Activated CD4-positive, alpha-beta memory T cell treated with anti-CD3 and anti-CD28 coated beads for 36 hours (primary cell): ENCODE measurements at regions of chr16 and their contacts with region 1.

Region 1: GRCh38 chr16:67816240-67817031 is 9.7 kb downstream of the TSNAXIP1 start:
- DNase-seq: peak; percentile 94
- H3K4me3 Mint-ChIP-seq: peak overlapping the region; percentile 35
- H3K27ac Mint-ChIP-seq: peak overlapping the region; percentile 28
- H3K4me1 Mint-ChIP-seq: peaks cover 2% of the 10 kb centered on the region
- H3K27me3 Mint-ChIP-seq: no peaks in the 10 kb centered on the region

Region 2: DNA sequence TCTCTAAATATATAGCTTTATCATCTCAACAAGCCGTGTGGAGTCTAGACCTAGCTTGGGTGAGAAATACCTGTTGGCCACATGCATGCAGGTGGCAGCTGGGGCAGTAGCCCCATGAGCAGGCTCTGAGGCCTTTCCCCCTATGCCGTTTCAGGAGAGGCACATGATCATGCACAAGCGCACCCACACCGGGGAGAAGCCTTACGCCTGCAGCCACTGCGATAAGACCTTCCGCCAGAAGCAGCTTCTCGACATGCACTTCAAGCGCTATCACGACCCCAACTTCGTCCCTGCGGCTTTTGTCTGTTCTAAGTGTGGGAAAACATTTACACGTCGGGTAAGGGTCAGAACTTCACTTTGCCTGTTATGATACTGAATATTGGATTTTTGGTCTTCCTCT is 188.2 kb before region 1 on chr16:
- CTCF ChIA-PET with region 1: no interaction called
- POLR2A ChIA-PET with region 1: no interaction called
- intact Hi-C with region 1: no loop called
- DNase-seq: no peak
- H3K4me3 Mint-ChIP-seq: no peak overlapping the region
- H3K27ac Mint-ChIP-seq: no peak overlapping the region
- H3K4me1 Mint-ChIP-seq: no peaks in the 10 kb centered on the region
- H3K27me3 Mint-ChIP-seq: no peaks in the 10 kb centered on the region

Region 3: DNA sequence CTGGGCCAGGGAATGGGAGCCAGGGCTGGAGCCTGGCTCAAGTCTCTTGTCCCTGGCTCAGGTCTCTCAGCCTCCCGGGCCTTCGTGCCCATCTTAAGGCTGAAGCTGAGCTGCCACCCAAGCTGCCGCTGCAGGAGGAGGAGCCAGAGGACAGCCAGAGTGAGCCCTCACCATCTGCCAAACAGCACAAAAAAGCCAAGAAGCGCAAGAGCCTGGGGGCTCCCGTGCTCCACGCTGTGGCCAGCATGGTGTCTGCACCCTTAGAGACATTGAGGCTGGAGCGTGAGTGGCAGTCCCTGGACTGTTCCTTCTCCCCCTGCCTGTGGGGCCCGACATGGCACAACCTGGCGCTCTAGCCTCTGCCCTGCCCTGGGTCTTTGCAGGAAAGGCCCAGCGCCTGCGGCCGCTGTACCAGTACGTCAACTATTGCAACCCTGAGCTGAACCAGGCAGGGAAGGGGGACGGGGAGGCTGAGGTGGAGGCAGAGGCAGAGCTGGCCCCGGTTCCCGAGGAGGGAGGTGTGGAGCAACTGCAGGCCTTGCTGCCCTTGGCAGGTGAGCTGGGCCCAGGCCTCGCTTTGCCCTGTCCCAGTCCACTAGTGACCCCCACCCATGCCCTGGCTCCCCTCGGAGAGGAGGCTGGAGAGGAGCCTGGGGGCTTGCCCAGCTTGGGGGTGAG is 148.5 kb before region 1 on chr16:
- CTCF ChIA-PET with region 1: interaction called, 14 read pairs
- POLR2A ChIA-PET with region 1: no interaction called
- intact Hi-C with region 1: no loop called
- DNase-seq: peak; percentile 90
- H3K4me3 Mint-ChIP-seq: peak overlapping the region; percentile 82
- H3K27ac Mint-ChIP-seq: no peak overlapping the region
- H3K4me1 Mint-ChIP-seq: peaks cover 15% of the 10 kb centered on the region
- H3K27me3 Mint-ChIP-seq: no peaks in the 10 kb centered on the region

Region 4: GRCh38 chr16:67760206-67760955 is 56.1 kb before region 1 on chr16:
- CTCF ChIA-PET with region 1: no interaction called
- POLR2A ChIA-PET with region 1: no interaction called
- intact Hi-C with region 1: no loop called
- DNase-seq: no peak
- H3K4me3 Mint-ChIP-seq: no peak overlapping the region
- H3K27ac Mint-ChIP-seq: no peak overlapping the region
- H3K4me1 Mint-ChIP-seq: peaks cover 18% of the 10 kb centered on the region
- H3K27me3 Mint-ChIP-seq: no peaks in the 10 kb centered on the region

Region 5: GRCh38 chr16:67800338-67800926 is 16.0 kb before region 1 on chr16:
- CTCF ChIA-PET with region 1: interaction called, 51 read pairs
- POLR2A ChIA-PET with region 1: no interaction called
- intact Hi-C with region 1: no loop called
- DNase-seq: no peak
- H3K4me3 Mint-ChIP-seq: no peak overlapping the region
- H3K27ac Mint-ChIP-seq: peak overlapping the region; percentile 38
- H3K4me1 Mint-ChIP-seq: peaks cover 62% of the 10 kb centered on the region
- H3K27me3 Mint-ChIP-seq: no peaks in the 10 kb centered on the region

Region 6: DNA sequence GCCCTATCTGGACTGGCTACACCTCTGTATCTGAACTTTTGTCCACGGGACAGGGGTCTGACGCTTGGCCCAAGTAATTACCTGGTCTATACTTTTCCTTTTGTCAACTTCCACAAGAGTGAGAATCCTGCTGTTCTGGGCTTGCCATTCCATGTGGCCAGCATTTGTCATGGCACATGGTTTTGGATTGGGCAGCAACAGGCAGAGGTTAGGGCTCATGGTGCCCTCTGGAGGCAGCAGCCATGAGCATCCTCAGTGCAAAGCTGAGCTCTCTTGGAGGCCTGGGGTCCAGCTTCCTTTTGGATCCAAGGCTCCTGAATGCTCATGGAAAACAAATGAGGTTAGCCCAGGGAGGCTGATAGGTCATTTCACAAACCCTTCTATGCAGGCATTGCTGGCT is 48.9 kb after region 1 on chr16:
- CTCF ChIA-PET with region 1: interaction called, 22 read pairs
- POLR2A ChIA-PET with region 1: no interaction called
- intact Hi-C with region 1: loop called (anchors 5 kb)
- DNase-seq: peak; percentile 32
- H3K4me3 Mint-ChIP-seq: no peak overlapping the region
- H3K27ac Mint-ChIP-seq: no peak overlapping the region
- H3K4me1 Mint-ChIP-seq: peaks cover 10% of the 10 kb centered on the region
- H3K27me3 Mint-ChIP-seq: no peaks in the 10 kb centered on the region

Region 7: GRCh38 chr16:67917852-67918236 is 101.4 kb after region 1 on chr16:
- CTCF ChIA-PET with region 1: interaction called, 25 read pairs
- POLR2A ChIA-PET with region 1: no interaction called
- intact Hi-C with region 1: no loop called
- DNase-seq: peak; percentile 75
- H3K4me3 Mint-ChIP-seq: no peak overlapping the region
- H3K27ac Mint-ChIP-seq: peak overlapping the region; percentile 77
- H3K4me1 Mint-ChIP-seq: peaks cover 31% of the 10 kb centered on the region
- H3K27me3 Mint-ChIP-seq: no peaks in the 10 kb centered on the region

Region 8: DNA sequence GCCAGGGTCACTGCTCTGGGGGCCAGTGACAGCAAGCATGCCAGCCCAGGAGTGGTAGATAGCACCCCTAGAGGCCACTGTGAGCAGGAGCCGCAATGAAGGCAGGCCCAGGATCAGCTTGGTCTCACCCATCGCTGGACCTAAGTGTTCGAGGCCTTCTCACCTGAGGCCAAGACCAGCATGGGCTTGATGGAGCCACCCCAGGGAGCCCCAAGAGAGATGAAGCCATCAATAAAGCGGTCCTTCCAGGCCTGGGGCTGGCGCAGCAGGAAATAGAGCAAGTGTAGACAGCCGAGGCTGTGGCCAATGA is 125.7 kb after region 1 on chr16:
- CTCF ChIA-PET with region 1: interaction called, 22 read pairs
- POLR2A ChIA-PET with region 1: no interaction called
- intact Hi-C with region 1: no loop called
- DNase-seq: peak; percentile 50
- H3K4me3 Mint-ChIP-seq: no peak overlapping the region
- H3K27ac Mint-ChIP-seq: no peak overlapping the region
- H3K4me1 Mint-ChIP-seq: peaks cover 27% of the 10 kb centered on the region
- H3K27me3 Mint-ChIP-seq: no peaks in the 10 kb centered on the region